ENCODE measurements at regions of chr2 and their contacts with region 1.

Region 1: GRCh38 chr2:97663965-97664635 is at the start of gene ACTR1B:
- DNase-seq: peak; percentile 98
- ATAC-seq: peak; percentile 95 to 96
- total RNA-seq, gene ACTR1B: 51.0 to 65.3 TPM

Region 2: DNA sequence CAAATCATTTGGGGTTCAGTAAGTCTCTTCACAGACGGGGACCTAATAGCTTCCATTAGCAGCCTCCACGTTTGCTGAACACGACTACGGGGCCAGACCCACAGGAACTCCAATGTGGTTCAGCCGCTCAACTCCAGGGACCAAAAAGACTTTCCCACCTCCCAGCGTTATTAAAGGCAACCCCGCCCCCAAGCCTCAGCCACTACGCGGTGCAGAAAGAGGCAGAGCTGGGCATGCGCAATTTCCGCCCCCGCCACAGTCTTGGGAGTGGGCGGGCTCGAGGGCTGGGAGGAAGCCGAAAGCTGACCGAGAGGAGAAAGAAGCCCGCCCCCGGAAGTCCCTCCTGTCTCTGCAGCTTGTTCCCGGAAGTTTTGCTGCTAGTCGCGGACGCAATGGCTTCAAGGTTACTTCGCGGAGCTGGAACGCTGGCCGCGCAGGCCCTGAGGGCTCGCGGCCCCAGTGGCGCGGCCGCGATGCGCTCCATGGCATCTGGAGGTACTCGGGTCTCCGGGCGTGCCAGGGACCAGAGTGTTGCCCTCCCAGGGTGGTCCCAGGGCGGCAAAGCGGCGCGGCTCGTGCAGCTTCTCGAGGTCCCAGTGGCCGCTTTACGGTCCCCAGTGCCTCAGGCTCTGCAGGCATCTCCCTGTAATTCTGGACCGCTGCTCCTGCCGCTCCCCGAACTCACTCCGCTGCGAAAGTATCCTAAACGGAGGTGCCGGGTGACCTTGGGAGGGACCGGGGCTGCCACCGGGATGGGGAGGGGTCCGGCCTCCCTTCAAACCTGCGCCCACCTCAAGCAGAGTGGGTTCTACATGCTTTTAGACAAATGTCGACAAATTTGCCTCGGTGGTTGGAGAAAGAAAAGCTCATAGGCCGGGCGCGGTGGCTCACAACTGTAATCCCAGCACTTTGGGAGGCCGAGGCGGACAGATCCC is 18.1 kb before region 1 on chr2 and contains the start of gene COX5B:
- intact Hi-C with region 1: loop called in 1 of 2 experiments (anchors 2 kb)
- DNase-seq: peak; percentile 99
- ATAC-seq: peak; percentile 99
- total RNA-seq, gene COX5B: 939 to 947 TPM

Region 3: DNA sequence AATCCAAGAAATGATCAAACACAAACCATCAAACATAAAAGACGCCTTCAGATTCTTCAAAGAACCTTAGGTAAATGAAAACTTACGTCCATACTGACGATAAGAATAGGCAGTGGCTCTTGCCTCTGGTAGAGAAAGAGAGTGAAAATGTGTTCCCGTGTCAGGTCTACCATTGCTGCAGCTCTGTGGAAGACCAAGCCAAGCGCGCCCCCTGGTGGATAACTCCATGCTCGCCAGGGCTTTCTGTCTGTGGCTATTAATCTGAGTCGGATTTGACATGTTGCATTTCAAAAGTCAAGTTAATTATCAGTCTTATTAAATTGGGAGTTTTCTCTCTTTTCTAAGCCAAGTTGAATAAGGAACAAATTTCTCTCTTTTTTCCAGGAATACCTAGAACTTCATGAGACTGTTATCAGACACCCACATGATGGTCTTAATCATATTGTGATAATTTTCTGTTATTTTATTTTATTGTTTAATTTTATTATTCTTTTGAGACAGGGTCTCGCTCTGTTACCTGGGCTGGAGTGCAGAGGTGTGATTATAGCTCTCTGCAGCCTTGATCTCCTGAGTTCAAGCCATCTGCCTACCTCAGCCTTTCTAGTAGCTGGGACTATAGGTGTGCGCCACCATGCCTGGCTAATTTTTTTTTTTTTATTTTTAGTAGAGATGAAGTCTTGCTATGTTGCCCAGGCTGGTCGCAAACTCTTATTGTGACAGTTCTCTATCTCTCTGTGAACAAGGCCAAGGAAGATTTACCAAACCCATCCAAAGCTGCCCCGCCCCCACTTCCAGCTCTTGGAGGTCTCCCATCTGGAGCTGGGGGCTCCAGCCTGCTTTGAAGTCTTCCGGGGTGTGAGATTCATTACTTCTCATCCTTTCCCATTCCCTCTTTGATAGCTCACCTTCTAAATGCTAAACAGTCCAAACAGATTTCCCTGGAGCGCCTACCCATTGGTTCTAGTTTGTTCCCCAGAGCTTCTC is 33.4 kb after region 1 on chr2:
- intact Hi-C with region 1: loop called in 1 of 2 experiments (anchors 2 kb)
- DNase-seq: peak; percentile 92
- ATAC-seq: peak; percentile 93 to 94

Measured in left cardiac atrium (tissue), 4 donors.